Caco-2 (cell line): ENCODE measurements at regions of chrX and their contacts with region 1.

Region 1: GRCh38 chrX:121308276-121308805 is 260.9 kb downstream of the GLUD2 start:
- DNase-seq: peak in 1 of 2 experiments; percentile 16
- H3K4me3 ChIP-seq: no peak overlapping the region
- H3K4me3 Mint-ChIP-seq: no peak overlapping the region
- H3K27ac Mint-ChIP-seq: no peak overlapping the region
- H3K4me1 ChIP-seq: no peaks in the 10 kb centered on the region
- H3K4me1 Mint-ChIP-seq: no peaks in the 10 kb centered on the region
- H3K27me3 ChIP-seq: no peaks in the 10 kb centered on the region
- H3K27me3 Mint-ChIP-seq: no peaks in the 10 kb centered on the region
- CTCF ChIP-seq: peak in 1 of 2 experiments; percentile 47

Region 2: GRCh38 chrX:120790118-120790517 is 518.2 kb before region 1 on chrX:
- CTCF ChIA-PET with region 1: no interaction called
- POLR2A ChIA-PET with region 1: no interaction called
- intact Hi-C with region 1: loop called (anchors 10 kb)
- DNase-seq: peak in 1 of 2 experiments; percentile 39
- H3K4me3 ChIP-seq: no peak overlapping the region
- H3K4me3 Mint-ChIP-seq: no peak overlapping the region
- H3K27ac Mint-ChIP-seq: no peak overlapping the region
- H3K4me1 ChIP-seq: no peaks in the 10 kb centered on the region
- H3K4me1 Mint-ChIP-seq: no peaks in the 10 kb centered on the region
- H3K27me3 ChIP-seq: no peaks in the 10 kb centered on the region
- H3K27me3 Mint-ChIP-seq: peaks cover 3% of the 10 kb centered on the region
- CTCF ChIP-seq: peak; percentile 44 to 55

Region 3: GRCh38 chrX:121000587-121000986 is 307.8 kb before region 1 on chrX:
- CTCF ChIA-PET with region 1: no interaction called
- POLR2A ChIA-PET with region 1: no interaction called
- intact Hi-C with region 1: loop called (anchors 1 kb)
- DNase-seq: peak in 1 of 2 experiments; percentile 13
- H3K4me3 ChIP-seq: no peak overlapping the region
- H3K4me3 Mint-ChIP-seq: no peak overlapping the region
- H3K27ac Mint-ChIP-seq: no peak overlapping the region
- H3K4me1 ChIP-seq: no peaks in the 10 kb centered on the region
- H3K4me1 Mint-ChIP-seq: no peaks in the 10 kb centered on the region
- H3K27me3 ChIP-seq: no peaks in the 10 kb centered on the region
- H3K27me3 Mint-ChIP-seq: no peaks in the 10 kb centered on the region
- CTCF ChIP-seq: peak; percentile 21 to 26

Region 4: DNA sequence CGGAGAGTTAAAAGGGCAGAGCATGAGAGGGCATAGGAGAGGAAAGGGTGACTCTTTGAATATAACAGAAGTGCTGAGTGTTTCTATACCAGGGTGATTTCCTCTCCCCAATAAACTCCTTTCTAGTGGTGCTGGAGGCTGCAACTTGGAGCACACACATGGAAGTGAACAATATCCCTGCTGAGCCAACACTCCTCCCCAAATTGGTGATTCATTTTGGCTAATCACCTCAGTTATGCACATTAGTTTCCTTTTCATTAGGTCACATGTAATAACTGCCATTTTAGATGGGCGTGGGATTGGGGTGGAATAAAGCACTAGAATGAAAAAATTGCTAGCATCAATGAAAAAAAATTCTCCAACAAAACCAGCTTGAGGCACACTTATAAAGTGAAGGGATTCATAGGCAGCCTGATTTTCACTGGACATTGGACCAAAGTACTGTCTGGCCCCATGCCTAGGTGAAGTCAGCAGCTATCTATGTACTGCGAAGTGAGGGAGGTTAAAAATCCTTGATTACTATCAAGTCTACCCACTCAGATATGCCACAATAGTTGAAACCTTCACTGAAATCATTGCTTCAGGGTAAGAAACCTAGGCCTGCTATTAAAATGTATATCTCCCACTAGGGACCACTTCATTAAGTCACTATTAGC is 86.9 kb before region 1 on chrX:
- CTCF ChIA-PET with region 1: no interaction called
- POLR2A ChIA-PET with region 1: no interaction called
- intact Hi-C with region 1: no loop called
- DNase-seq: no peak
- H3K4me3 ChIP-seq: no peak overlapping the region
- H3K4me3 Mint-ChIP-seq: no peak overlapping the region
- H3K27ac Mint-ChIP-seq: no peak overlapping the region
- H3K4me1 ChIP-seq: no peaks in the 10 kb centered on the region
- H3K4me1 Mint-ChIP-seq: no peaks in the 10 kb centered on the region
- H3K27me3 ChIP-seq: no peaks in the 10 kb centered on the region
- H3K27me3 Mint-ChIP-seq: no peaks in the 10 kb centered on the region
- CTCF ChIP-seq: no peak

Region 5: GRCh38 chrX:121322159-121322558 is 13.8 kb after region 1 on chrX:
- CTCF ChIA-PET with region 1: no interaction called
- POLR2A ChIA-PET with region 1: no interaction called
- intact Hi-C with region 1: no loop called
- DNase-seq: no peak
- H3K4me3 ChIP-seq: no peak overlapping the region
- H3K4me3 Mint-ChIP-seq: no peak overlapping the region
- H3K27ac Mint-ChIP-seq: no peak overlapping the region
- H3K4me1 ChIP-seq: no peaks in the 10 kb centered on the region
- H3K4me1 Mint-ChIP-seq: no peaks in the 10 kb centered on the region
- H3K27me3 ChIP-seq: no peaks in the 10 kb centered on the region
- H3K27me3 Mint-ChIP-seq: no peaks in the 10 kb centered on the region
- CTCF ChIP-seq: no peak

Region 6: GRCh38 chrX:121433289-121433688 is 124.9 kb after region 1 on chrX:
- CTCF ChIA-PET with region 1: no interaction called
- POLR2A ChIA-PET with region 1: no interaction called
- intact Hi-C with region 1: no loop called
- DNase-seq: no peak
- H3K4me3 ChIP-seq: no peak overlapping the region
- H3K4me3 Mint-ChIP-seq: no peak overlapping the region
- H3K27ac Mint-ChIP-seq: no peak overlapping the region
- H3K4me1 ChIP-seq: no peaks in the 10 kb centered on the region
- H3K4me1 Mint-ChIP-seq: no peaks in the 10 kb centered on the region
- H3K27me3 ChIP-seq: no peaks in the 10 kb centered on the region
- H3K27me3 Mint-ChIP-seq: no peaks in the 10 kb centered on the region
- CTCF ChIP-seq: no peak

Region 7: GRCh38 chrX:121571332-121571731 is 263.0 kb after region 1 on chrX:
- CTCF ChIA-PET with region 1: no interaction called
- POLR2A ChIA-PET with region 1: no interaction called
- intact Hi-C with region 1: loop called (anchors 1 kb)
- DNase-seq: peak in 1 of 2 experiments; percentile 5
- H3K4me3 ChIP-seq: no peak overlapping the region
- H3K4me3 Mint-ChIP-seq: no peak overlapping the region
- H3K27ac Mint-ChIP-seq: no peak overlapping the region
- H3K4me1 ChIP-seq: no peaks in the 10 kb centered on the region
- H3K4me1 Mint-ChIP-seq: no peaks in the 10 kb centered on the region
- H3K27me3 ChIP-seq: no peaks in the 10 kb centered on the region
- H3K27me3 Mint-ChIP-seq: no peaks in the 10 kb centered on the region
- CTCF ChIP-seq: no peak

Region 8: GRCh38 chrX:121579016-121579760 is 270.8 kb after region 1 on chrX:
- CTCF ChIA-PET with region 1: no interaction called
- POLR2A ChIA-PET with region 1: no interaction called
- intact Hi-C with region 1: loop called (anchors 1 kb)
- DNase-seq: peak in 1 of 2 experiments; percentile 17
- H3K4me3 ChIP-seq: no peak overlapping the region
- H3K4me3 Mint-ChIP-seq: no peak overlapping the region
- H3K27ac Mint-ChIP-seq: no peak overlapping the region
- H3K4me1 ChIP-seq: no peaks in the 10 kb centered on the region
- H3K4me1 Mint-ChIP-seq: no peaks in the 10 kb centered on the region
- H3K27me3 ChIP-seq: no peaks in the 10 kb centered on the region
- H3K27me3 Mint-ChIP-seq: no peaks in the 10 kb centered on the region
- CTCF ChIP-seq: peak in 1 of 2 experiments; percentile 35

Region 9: DNA sequence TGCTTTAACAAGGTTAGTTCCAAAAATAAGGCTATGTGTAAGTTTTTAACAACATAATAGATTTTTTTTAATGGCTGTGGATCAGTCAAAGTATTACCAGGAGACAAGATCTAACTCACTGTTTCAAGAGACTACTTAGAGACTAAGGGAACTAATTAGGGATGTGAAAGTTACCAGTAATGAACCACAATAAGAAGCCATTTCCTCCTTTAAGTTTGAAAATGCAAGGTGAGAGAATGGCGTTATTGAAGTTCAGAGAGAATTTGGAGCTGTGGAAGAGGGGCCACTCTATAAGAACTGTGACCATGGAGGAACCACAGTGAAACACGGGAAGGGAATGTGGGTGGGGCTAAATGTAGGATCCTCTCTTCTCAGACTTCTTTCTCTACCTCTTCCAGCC is 363.3 kb after region 1 on chrX:
- CTCF ChIA-PET with region 1: no interaction called
- POLR2A ChIA-PET with region 1: no interaction called
- intact Hi-C with region 1: no loop called
- DNase-seq: no peak
- H3K4me3 ChIP-seq: no peak overlapping the region
- H3K4me3 Mint-ChIP-seq: no peak overlapping the region
- H3K27ac Mint-ChIP-seq: no peak overlapping the region
- H3K4me1 ChIP-seq: no peaks in the 10 kb centered on the region
- H3K4me1 Mint-ChIP-seq: no peaks in the 10 kb centered on the region
- H3K27me3 ChIP-seq: no peaks in the 10 kb centered on the region
- H3K27me3 Mint-ChIP-seq: no peaks in the 10 kb centered on the region
- CTCF ChIP-seq: no peak